ENCODE measurements at regions of chr18 and their contacts with region 1.

Region 1: DNA sequence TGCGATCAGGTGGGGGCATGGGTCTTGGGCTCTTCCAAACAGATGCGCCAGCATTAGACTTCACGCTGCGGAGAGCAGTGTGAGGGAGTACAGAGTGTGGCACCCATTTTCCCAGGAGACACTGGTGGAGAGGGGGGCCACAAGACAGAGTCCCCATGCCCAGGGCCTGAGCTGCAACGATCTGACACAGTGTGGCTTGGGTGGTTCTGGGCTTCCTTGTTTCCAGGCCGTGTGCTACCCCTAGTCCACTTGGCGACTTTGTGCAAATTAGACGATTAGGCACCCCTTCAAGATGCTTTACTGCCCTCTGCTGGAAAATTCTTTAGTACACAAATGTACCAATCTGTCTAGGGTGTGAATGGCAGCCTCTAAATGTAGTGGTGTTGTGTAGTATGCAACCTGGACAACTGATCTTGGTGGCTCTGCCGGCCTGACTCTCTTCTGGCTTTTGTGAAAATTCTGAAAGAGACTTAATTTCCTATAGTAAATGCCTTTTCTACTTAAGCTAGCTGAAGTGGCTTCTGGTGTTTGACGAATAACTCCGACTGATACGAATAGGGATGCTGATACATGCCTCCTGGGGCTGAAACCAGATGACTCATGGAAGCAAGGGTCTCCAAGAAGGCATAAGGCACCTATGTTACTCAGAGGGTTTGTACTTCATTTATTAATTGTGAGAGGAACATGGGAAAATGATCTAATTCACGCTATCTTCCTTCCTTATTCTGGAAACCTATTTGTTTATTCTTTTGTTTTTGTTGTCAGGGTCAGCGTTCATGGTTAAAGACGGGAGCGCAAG is 92.3 kb upstream of the SMAD2 start:
- DNase-seq: peak; percentile 76 to 91 (median 88)
- H3K4me3 ChIP-seq: no peak overlapping the region
- H3K27ac ChIP-seq: no peak overlapping the region
- H3K4me1 ChIP-seq: peaks cover 0 to 12% (median 3%) of the 10 kb centered on the region in 4 experiments
- H3K27me3 ChIP-seq: peaks cover 0 to 19% (median 0%) of the 10 kb centered on the region in 5 experiments

Region 2: GRCh38 chr18:47772374-47773248 is 250.1 kb before region 1 on chr18:
- CTCF ChIA-PET with region 1: interaction called, 21 read pairs
- POLR2A ChIA-PET with region 1: no interaction called
- DNase-seq: peak; percentile 38 to 53 (median 44)
- H3K4me3 ChIP-seq: no peak overlapping the region
- H3K27ac ChIP-seq: no peak overlapping the region
- H3K4me1 ChIP-seq: peaks cover 0 to 3% (median 0%) of the 10 kb centered on the region in 4 experiments
- H3K27me3 ChIP-seq: peaks cover 0 to 14% (median 8%) of the 10 kb centered on the region in 5 experiments

Region 3: DNA sequence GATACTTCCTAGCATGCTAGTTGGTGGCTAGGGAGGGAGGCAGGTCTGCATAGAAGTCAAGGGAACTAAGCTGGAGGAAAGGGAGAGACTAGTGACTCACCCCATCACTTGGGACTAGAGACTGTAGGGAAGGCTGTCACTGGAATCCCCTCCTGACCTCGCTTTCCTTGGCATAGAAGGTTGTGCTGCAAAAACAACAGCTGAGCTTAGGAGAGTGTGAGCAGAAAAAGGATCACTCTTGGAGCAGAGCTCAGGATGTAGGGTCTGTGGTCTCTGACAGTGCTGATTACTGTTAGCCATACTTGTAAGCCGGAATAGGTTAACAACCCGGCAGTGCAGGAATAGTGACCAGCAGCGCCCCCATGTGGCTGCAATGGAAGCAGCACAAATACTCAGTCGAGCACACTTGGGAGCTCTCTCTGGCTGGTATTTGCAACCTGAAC is 25.4 kb before region 1 on chr18:
- CTCF ChIA-PET with region 1: no interaction called
- POLR2A ChIA-PET with region 1: no interaction called
- DNase-seq: peak; percentile 30 to 43 (median 41)
- H3K4me3 ChIP-seq: no peak overlapping the region
- H3K27ac ChIP-seq: no peak overlapping the region
- H3K4me1 ChIP-seq: peaks cover 12 to 26% (median 18%) of the 10 kb centered on the region in 4 experiments
- H3K27me3 ChIP-seq: no peaks in the 10 kb centered on the region

Region 4: GRCh38 chr18:48007955-48008701 is 14.6 kb before region 1 on chr18:
- CTCF ChIA-PET with region 1: interaction called, 13 read pairs
- POLR2A ChIA-PET with region 1: no interaction called
- DNase-seq: peak; percentile 41 to 69 (median 55)
- H3K4me3 ChIP-seq: peak overlapping the region; percentile 24 to 78 (median 65)
- H3K27ac ChIP-seq: no peak overlapping the region
- H3K4me1 ChIP-seq: peaks cover 2 to 29% (median 14%) of the 10 kb centered on the region in 4 experiments
- H3K27me3 ChIP-seq: peaks cover 0 to 12% (median 2%) of the 10 kb centered on the region in 5 experiments

Region 5: GRCh38 chr18:48053881-48054816 is 31.4 kb after region 1 on chr18:
- CTCF ChIA-PET with region 1: no interaction called
- POLR2A ChIA-PET with region 1: no interaction called
- DNase-seq: no peak
- H3K4me3 ChIP-seq: no peak overlapping the region
- H3K27ac ChIP-seq: no peak overlapping the region
- H3K4me1 ChIP-seq: peaks cover 0 to 3% (median 0%) of the 10 kb centered on the region in 4 experiments
- H3K27me3 ChIP-seq: peaks cover 16 to 76% (median 22%) of the 10 kb centered on the region in 5 experiments

Region 6: DNA sequence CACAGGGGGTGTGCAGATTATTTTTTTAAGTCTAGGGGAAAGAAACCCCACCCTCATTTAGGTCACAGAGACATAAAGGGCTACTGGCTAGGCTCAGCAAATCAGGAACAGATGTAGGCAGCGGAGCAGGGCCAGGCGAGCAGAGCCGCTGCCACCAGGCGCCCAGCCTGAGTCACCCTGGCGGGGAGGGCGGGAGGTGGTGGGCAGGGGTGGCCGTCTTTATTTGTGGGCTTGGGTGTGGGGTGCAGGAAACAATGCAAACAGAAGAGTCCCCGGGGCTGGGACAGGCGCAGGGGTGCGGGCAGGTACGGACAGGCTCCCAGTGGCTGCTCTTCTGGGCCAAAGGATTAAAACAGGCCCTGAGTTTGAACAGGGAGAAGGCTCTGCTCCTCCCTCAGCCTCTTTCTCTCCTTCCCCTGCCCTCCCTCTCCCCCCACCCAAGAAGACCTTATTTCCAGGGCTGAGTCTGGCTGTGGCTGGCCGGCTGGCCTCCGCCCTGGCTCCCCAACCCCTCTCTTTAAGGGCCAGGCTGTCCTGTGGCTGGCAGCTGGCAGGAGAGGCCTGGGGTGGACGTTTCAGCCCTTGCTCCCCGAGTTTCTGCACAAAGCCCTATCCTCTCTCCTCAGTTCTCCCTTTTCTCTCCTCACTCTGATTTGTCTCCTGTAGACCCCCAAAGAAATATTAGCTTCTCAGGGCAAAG is 50.7 kb after region 1 on chr18:
- CTCF ChIA-PET with region 1: no interaction called
- POLR2A ChIA-PET with region 1: no interaction called
- DNase-seq: no peak
- H3K4me3 ChIP-seq: no peak overlapping the region
- H3K27ac ChIP-seq: no peak overlapping the region
- H3K4me1 ChIP-seq: no peaks in the 10 kb centered on the region
- H3K27me3 ChIP-seq: peaks cover 0 to 27% (median 18%) of the 10 kb centered on the region in 5 experiments